ENCODE measurements at regions of chr11 and their contacts with region 1.

Region 1: DNA sequence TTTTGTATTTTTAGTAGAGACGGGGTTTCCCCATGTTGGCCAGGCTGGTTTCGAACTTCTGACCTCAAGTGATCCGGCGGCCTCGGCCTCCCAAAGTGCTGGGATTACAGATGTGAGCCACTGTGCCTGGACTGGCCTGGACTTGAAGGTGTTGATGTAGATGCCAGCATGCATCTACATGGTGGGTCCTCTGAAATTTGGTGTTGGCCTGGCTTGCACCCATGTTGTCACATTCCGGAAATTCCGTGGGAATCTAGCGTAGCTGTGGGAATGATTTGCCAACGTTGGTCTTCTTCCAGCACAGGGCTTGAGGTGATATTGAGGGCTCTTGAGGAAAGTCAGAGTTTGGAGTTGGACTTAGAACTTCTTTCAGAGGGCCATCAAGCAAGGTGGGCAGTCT is 6.5 kb downstream of the PACS1 start:
- DNase-seq: no peak
- H3K4me3 ChIP-seq: no peak overlapping the region
- H3K27ac ChIP-seq: no peak overlapping the region
- H3K4me1 ChIP-seq: peaks cover 24 to 66% (median 32%) of the 10 kb centered on the region in 3 donors
- H3K27me3 ChIP-seq: no peaks in the 10 kb centered on the region
- CTCF ChIP-seq: no peak
- POLR2A ChIP-seq: no peak

Region 2: GRCh38 chr11:66133216-66133775 is 56.7 kb after region 1 on chr11:
- intact Hi-C with region 1: loop called (anchors 5 kb)
- DNase-seq: no peak
- H3K4me3 ChIP-seq: no peak overlapping the region
- H3K27ac ChIP-seq: no peak overlapping the region
- H3K4me1 ChIP-seq: peaks cover 0 to 22% (median 0%) of the 10 kb centered on the region in 3 donors
- H3K27me3 ChIP-seq: no peaks in the 10 kb centered on the region
- CTCF ChIP-seq: no peak
- POLR2A ChIP-seq: no peak

Region 3: DNA sequence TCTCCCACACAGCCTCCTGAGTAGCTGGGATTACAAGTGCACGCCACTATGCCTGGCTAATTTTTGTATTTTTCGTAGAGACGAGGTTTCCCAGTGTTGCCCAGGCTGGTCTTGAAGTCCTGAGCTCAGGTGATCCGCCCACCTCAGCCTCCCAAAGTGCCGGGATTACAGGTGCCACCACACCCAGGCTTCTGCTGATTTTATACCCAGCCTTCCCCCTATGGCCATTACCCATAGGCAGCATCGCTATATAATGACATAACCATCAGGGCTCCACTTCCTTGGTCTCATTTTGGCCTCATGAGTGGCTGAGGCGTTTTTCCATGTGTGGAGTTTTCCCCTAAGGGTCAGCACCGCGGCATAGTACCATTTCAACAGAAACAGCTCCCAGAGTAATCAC is 131.3 kb after region 1 on chr11:
- intact Hi-C with region 1: no loop called
- DNase-seq: no peak
- H3K4me3 ChIP-seq: no peak overlapping the region
- H3K27ac ChIP-seq: no peak overlapping the region
- H3K4me1 ChIP-seq: peaks cover 0 to 8% (median 0%) of the 10 kb centered on the region in 3 donors
- H3K27me3 ChIP-seq: no peaks in the 10 kb centered on the region
- CTCF ChIP-seq: no peak
- POLR2A ChIP-seq: no peak